ENCODE measurements at regions of chr4 and their contacts with region 1.

Region 1: GRCh38 chr4:87848622-87849351 is 16.0 kb downstream of the MEPE start:
- DNase-seq: peak in 3 of 6 donors; percentile 21 to 54 (median 46)
- ATAC-seq: peak; percentile 87 to 90 (median 90)
- H3K4me3 ChIP-seq: no peak overlapping the region
- H3K27ac ChIP-seq: no peak overlapping the region
- H3K4me1 ChIP-seq: peaks cover 0 to 16% (median 0%) of the 10 kb centered on the region in 3 donors
- H3K27me3 ChIP-seq: no peaks in the 10 kb centered on the region
- CTCF ChIP-seq: peak; percentile 15 to 56 (median 48)

Region 2: DNA sequence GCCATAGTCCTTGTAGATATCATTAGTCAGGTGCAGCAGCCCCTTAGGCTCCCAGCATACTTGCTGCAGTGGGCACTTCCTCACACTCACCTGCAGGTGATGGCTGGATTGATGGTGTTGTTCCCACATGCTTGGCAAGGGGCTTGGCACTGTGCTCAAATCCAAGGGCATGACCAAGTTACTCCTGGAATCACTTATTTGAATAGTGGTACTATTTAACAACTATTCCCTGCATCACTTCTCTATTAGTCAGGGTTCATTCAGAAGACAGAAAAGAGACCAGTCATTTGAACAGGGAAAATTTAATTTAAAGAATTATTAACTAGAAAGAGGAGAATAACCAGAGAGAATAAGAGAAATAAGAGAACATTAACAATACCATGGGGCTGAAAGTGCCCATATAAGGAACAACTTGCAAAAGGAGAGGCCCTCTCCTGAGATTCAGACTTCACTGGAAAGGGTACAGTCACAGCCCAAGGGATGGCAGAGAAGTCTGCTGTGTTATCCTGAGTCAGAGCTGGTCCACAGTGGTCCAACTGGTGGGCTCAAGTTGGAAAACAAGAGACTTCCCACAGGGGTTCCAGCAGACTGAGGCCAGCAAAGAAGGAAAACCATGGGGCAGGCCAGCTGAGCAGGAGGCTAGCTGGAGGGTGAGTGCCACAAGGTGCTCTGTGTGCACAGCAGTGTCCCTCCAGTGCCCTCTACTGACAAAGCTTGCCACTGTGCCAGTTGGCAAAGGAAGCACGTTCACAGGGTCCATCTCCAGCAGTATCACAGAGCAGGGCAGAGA is 136.5 kb after region 1 on chr4:
- intact Hi-C with region 1: loop called in 1 of 3 experiments (anchors 5 kb)
- DNase-seq: peak; percentile 50 to 69 (median 62)
- ATAC-seq: peak; percentile 81 to 99 (median 96)
- H3K4me3 ChIP-seq: no peak overlapping the region
- H3K27ac ChIP-seq: peak overlapping the region in 1 of 4 donors; percentile 39
- H3K4me1 ChIP-seq: peaks cover 0 to 3% (median 0%) of the 10 kb centered on the region in 3 donors
- H3K27me3 ChIP-seq: no peaks in the 10 kb centered on the region
- CTCF ChIP-seq: peak; percentile 7 to 46 (median 38)